ENCODE measurements at regions of chr20 and their contacts with region 1.

Region 1: DNA sequence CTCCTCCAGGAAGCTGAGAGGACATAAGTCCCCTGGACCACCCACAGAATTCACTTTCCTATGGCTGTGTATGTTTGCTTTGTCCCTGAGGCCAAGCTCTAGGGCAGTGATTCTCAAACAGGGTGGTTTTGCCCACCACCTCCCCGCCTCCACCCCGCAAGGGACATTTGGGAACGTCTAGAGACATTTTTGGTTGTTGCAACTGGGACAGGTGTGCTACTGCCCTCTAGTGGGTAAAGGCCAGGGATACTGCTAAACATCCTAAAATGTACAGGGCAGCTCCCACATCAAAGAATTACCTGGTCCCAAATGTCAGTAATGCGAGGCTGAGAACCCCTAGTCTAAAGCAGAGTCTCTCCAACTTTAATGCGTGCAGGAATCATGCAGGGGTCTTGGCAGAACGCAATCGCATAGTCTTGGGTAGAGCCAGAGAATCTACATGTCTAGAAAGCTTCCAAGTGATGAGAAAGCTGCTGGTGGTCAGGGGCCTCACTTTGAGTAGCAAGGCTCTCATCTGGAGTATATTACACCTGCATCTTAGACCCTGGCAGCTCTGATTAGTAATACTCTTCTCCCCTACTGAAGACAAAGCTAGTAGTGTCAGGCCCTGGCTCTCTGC is 5.1 kb downstream of the KCNS1 start:
- DNase-seq: peak; percentile 89
- ATAC-seq: peak; percentile 89
- H3K4me3 ChIP-seq: no peak overlapping the region
- H3K27ac ChIP-seq: no peak overlapping the region
- H3K4me1 ChIP-seq: no peaks in the 10 kb centered on the region
- H3K27me3 ChIP-seq: no peaks in the 10 kb centered on the region
- CTCF ChIP-seq: peak; percentile 86

Region 2: DNA sequence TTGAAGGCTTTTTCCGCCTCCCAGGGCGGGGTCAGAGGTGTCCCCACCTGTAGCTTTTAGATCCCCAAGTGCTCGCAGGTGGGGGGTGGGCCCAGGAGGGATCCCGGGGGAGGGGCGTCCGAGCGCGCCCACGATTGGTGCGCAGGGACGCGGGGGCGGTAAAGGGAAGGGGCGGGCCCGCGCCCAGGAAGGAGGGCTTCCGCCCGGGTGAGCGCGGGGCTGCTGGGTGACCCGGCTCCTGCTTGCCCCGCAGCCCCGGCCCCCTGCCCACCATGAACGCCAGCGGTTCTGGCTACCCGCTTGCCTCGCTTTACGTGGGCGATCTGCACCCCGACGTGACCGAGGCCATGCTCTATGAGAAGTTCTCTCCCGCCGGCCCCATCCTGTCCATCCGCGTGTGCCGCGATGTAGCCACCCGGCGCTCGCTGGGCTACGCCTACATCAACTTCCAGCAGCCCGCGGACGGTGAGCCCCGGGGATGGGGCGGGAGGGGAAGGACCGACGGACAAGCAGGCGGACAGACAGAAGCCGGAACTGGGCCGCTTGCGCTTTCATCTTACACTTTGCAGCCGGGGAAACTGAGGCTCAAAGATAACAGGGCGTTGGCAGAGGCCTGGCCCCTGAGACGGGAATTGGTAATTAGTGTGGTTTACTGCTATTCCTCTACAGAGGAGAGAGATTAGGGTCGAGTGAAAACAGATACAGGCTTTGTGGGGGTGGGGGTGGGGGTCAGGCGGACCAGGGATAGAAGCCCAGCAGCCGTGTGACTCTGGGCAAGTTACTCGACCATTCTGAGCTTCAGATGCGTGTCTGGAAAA is 185.8 kb before region 1 on chr20 and contains the start of gene PABPC1L:
- CTCF ChIA-PET with region 1: interaction called, 3 read pairs
- POLR2A ChIA-PET with region 1: no interaction called
- intact Hi-C with region 1: loop called (anchors 1 kb)
- DNase-seq: peak; percentile 79
- ATAC-seq: peak; percentile 84
- H3K4me3 ChIP-seq: peak within 1 kb of the TSS; percentile 79
- H3K27ac ChIP-seq: no peak within 1 kb of the TSS
- H3K4me1 ChIP-seq: peaks cover 6% of the 10 kb centered on the region; the same call in 1 of the 2 replicates
- H3K27me3 ChIP-seq: no peaks in the 10 kb centered on the region
- CTCF ChIP-seq: no peak
- total RNA-seq, gene PABPC1L: 32.0 and 40.7 TPM in 2 replicates

Region 3: DNA sequence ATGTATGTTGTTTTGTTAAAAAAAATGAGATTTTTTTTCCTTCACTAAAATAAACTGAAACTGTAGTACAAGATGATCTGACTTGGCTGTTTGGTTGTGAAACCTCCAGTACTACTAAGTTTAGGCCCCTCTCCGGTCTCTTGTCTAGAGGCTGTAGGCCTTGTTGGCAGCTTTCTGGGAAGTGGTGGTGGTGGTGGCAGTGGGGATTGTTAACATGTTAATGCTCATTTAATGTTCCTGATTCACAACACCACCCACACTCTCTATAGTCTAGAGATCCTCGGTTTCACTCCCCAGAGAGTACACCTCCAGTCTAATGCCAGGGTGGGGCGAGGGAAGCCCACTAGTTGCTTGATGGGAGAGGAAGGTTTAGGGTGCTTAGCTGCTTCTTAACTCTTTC is 105.4 kb before region 1 on chr20:
- CTCF ChIA-PET with region 1: no interaction called
- POLR2A ChIA-PET with region 1: no interaction called
- intact Hi-C with region 1: no loop called
- DNase-seq: no peak
- ATAC-seq: no peak
- H3K4me3 ChIP-seq: no peak overlapping the region
- H3K27ac ChIP-seq: no peak overlapping the region
- H3K4me1 ChIP-seq: peaks cover 12% of the 10 kb centered on the region
- H3K27me3 ChIP-seq: no peaks in the 10 kb centered on the region
- CTCF ChIP-seq: no peak

Region 4: GRCh38 chr20:45011108-45011526 is 84.7 kb before region 1 on chr20:
- CTCF ChIA-PET with region 1: interaction called, 6 read pairs
- POLR2A ChIA-PET with region 1: no interaction called
- intact Hi-C with region 1: loop called (anchors 1 kb)
- DNase-seq: peak; percentile 84
- ATAC-seq: peak; percentile 88
- H3K4me3 ChIP-seq: no peak overlapping the region
- H3K27ac ChIP-seq: peak overlapping the region; percentile 48
- H3K4me1 ChIP-seq: peaks cover 24% of the 10 kb centered on the region
- H3K27me3 ChIP-seq: no peaks in the 10 kb centered on the region
- CTCF ChIP-seq: peak; percentile 98

Region 5: GRCh38 chr20:45080867-45081624 is 14.8 kb before region 1 on chr20:
- CTCF ChIA-PET with region 1: no interaction called
- POLR2A ChIA-PET with region 1: no interaction called
- intact Hi-C with region 1: loop called (anchors 2 kb)
- DNase-seq: peak; percentile 69
- ATAC-seq: peak; percentile 92
- H3K4me3 ChIP-seq: no peak overlapping the region
- H3K27ac ChIP-seq: no peak overlapping the region
- H3K4me1 ChIP-seq: no peaks in the 10 kb centered on the region
- H3K27me3 ChIP-seq: no peaks in the 10 kb centered on the region
- CTCF ChIP-seq: peak; percentile 86

Region 6: GRCh38 chr20:45842169-45842812 is 746.4 kb after region 1 on chr20:
- CTCF ChIA-PET with region 1: no interaction called
- POLR2A ChIA-PET with region 1: no interaction called
- intact Hi-C with region 1: no loop called
- DNase-seq: no peak
- ATAC-seq: peak; percentile 26
- H3K4me3 ChIP-seq: no peak overlapping the region
- H3K27ac ChIP-seq: no peak overlapping the region
- H3K4me1 ChIP-seq: no peaks in the 10 kb centered on the region
- H3K27me3 ChIP-seq: no peaks in the 10 kb centered on the region
- CTCF ChIP-seq: no peak